PC-3 (cell line): ENCODE measurements at regions of chr6 and their contacts with region 1.

Region 1: GRCh38 chr6:150865406-150866146 is at the start of gene MTHFD1L:
- DNase-seq: peak; percentile 78
- ATAC-seq: peak; percentile 68
- H3K4me3 ChIP-seq: peak within 1 kb of the TSS; percentile 87
- H3K27ac ChIP-seq: peak within 1 kb of the TSS; percentile 67
- H3K4me1 ChIP-seq: peaks cover 6% of the 10 kb centered on the region
- H3K27me3 ChIP-seq: no peaks in the 10 kb centered on the region
- CTCF ChIP-seq: peak; percentile 55
- total RNA-seq, gene MTHFD1L: 11.9 and 17.5 TPM in 2 replicates

Region 2: DNA sequence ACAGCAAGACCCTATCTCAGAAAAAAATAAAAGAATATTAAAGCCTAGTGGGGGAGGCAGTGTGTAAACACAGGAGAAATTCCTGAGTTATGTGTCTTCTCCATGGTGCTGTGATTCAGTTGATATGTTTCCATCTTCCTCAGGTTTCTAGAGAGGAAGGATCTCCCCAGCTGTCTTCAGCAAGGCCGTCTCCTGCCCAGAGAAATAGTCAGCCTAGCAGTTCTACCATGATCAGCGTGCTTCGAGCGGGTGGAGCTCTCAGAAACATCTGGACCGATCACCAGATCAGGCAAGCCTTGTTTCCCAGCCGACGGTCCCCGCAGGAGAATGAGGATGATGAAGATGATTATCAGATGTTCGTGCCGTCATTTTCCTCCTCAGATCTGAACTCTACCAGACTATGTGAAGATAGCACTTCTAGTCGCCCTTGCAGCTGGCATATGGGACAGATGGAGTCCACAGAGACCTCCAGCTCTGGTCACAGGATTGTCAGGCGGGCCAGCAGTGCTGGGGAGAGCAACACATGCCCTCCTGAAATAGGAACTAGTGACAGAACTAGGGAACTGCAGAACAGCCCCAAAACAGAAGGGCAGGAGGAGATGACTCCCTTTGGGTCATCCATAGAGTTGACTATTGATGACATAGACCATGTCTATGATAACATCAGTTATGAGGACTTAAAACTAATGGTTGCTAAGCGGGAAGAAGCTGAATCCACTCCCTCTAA is 35.0 kb before region 1 on chr6:
- CTCF ChIA-PET with region 1: no interaction called
- POLR2A ChIA-PET with region 1: interaction called, 10 read pairs
- intact Hi-C with region 1: no loop called
- DNase-seq: peak; percentile 9
- ATAC-seq: no peak; the same call in 1 of the 2 replicates
- H3K4me3 ChIP-seq: no peak overlapping the region
- H3K27ac ChIP-seq: no peak overlapping the region
- H3K4me1 ChIP-seq: peaks cover 9% of the 10 kb centered on the region; the same call in 1 of the 2 replicates
- H3K27me3 ChIP-seq: no peaks in the 10 kb centered on the region
- CTCF ChIP-seq: no peak

Region 3: GRCh38 chr6:150881911-150882481 is 16.4 kb after region 1 on chr6:
- CTCF ChIA-PET with region 1: no interaction called
- POLR2A ChIA-PET with region 1: interaction called, 15 read pairs
- intact Hi-C with region 1: no loop called
- DNase-seq: peak; percentile 88
- ATAC-seq: peak; percentile 95
- H3K4me3 ChIP-seq: peak overlapping the region; percentile 23; the same call in 1 of the 2 replicates
- H3K27ac ChIP-seq: peak overlapping the region; percentile 98
- H3K4me1 ChIP-seq: peaks cover 27% of the 10 kb centered on the region
- H3K27me3 ChIP-seq: no peaks in the 10 kb centered on the region
- CTCF ChIP-seq: no peak